OCI-LY7 (cell line): ENCODE measurements at regions of chr2 and their contacts with region 1.

Region 1: DNA sequence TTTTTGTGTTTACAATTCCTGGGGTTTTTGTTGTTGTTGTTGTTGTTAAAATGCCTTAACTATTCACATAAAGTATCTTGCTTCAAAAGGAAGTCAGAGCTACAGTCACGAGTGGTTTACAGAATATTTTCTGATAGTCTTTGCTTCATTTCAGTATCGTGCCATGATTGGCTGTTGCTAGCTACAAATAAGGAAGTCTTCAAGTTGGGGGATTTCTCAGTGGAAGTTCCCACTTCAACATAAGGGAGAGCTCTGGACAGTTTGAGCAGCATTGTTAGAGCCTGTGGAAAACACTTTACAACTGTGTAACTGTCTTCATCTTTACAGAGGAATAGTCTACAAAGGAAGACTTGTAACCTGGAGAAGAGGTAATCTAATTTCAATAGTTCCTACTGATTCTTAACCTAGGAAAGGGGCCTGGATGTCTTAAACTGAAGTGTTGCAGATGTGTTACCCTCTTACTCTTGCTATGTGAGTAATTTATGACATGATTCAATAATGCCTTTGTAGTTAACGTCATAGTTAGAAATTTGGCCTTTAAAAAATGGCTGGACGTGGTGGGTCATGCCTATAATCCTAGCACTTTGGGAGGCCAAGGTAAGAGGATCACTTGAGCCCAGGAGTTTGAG is 23.4 kb upstream of the TANK start:
- DNase-seq: peak; percentile 77
- H3K4me3 ChIP-seq: peak overlapping the region; percentile 67
- H3K27ac ChIP-seq: peak overlapping the region; percentile 62
- H3K4me1 ChIP-seq: peaks cover 30% of the 10 kb centered on the region
- CTCF ChIP-seq: no peak

Region 2: GRCh38 chr2:160928854-160929620 is 207.8 kb before region 1 on chr2:
- CTCF ChIA-PET with region 1: no interaction called
- POLR2A ChIA-PET with region 1: no interaction called
- intact Hi-C with region 1: no loop called
- DNase-seq: no peak
- H3K4me3 ChIP-seq: no peak overlapping the region
- H3K27ac ChIP-seq: no peak overlapping the region
- H3K4me1 ChIP-seq: no peaks in the 10 kb centered on the region
- CTCF ChIP-seq: no peak

Region 3: GRCh38 chr2:161077367-161078210 is 59.2 kb before region 1 on chr2:
- CTCF ChIA-PET with region 1: no interaction called
- POLR2A ChIA-PET with region 1: no interaction called
- intact Hi-C with region 1: no loop called
- DNase-seq: no peak
- H3K4me3 ChIP-seq: no peak overlapping the region
- H3K27ac ChIP-seq: no peak overlapping the region
- H3K4me1 ChIP-seq: peaks cover 6% of the 10 kb centered on the region
- CTCF ChIP-seq: no peak

Region 4: DNA sequence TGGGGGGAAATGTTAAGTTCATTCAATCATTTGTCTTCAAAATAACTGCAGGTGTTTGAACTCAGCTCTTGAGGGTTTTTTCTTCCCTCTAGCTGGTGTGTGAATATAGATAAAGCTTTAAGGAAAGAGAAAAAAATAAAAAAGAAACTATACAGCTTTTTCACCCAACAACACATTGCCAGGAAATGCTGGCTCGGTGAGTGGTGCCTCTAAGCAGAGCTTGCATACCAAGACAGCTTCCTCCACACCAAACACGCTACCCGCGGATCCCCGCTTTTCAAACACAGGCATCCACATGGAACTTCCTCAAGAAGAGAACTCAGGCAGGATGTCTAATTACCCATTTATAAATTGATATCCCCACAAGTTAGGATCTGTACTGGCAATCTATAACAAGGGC is 46.4 kb before region 1 on chr2:
- CTCF ChIA-PET with region 1: no interaction called
- POLR2A ChIA-PET with region 1: interaction called, 13 read pairs
- intact Hi-C with region 1: no loop called
- DNase-seq: no peak
- H3K4me3 ChIP-seq: no peak overlapping the region
- H3K27ac ChIP-seq: no peak overlapping the region
- H3K4me1 ChIP-seq: peaks cover 26% of the 10 kb centered on the region
- CTCF ChIP-seq: no peak

Region 5: DNA sequence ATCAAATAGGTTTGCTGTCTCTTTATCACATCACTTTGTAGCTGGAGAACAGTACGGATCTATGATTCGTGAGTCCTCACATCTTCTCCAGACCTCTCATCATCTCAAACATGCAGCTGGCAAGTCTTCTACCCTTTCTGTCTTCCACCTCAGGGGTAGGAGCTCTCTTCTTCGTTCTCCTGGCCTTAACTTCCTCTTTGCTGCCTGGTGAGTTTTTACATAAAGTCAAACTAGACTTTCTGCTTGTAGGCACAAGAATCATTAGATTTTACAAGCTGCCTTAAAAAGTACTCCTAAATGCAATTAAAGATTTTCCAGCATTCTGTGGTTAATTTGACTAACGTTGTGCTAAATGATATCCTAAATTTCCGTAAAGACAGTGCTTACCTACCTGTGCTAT is 20.3 kb before region 1 on chr2:
- CTCF ChIA-PET with region 1: interaction called, 8 read pairs
- POLR2A ChIA-PET with region 1: interaction called, 26 read pairs
- intact Hi-C with region 1: no loop called
- DNase-seq: peak; percentile 40
- H3K4me3 ChIP-seq: no peak overlapping the region
- H3K27ac ChIP-seq: no peak overlapping the region
- H3K4me1 ChIP-seq: peaks cover 31% of the 10 kb centered on the region
- CTCF ChIP-seq: no peak

Region 6: GRCh38 chr2:161122772-161123530 is 13.9 kb before region 1 on chr2:
- CTCF ChIA-PET with region 1: interaction called, 8 read pairs
- POLR2A ChIA-PET with region 1: interaction called, 26 read pairs
- intact Hi-C with region 1: no loop called
- DNase-seq: no peak
- H3K4me3 ChIP-seq: no peak overlapping the region
- H3K27ac ChIP-seq: no peak overlapping the region
- H3K4me1 ChIP-seq: peaks cover 7% of the 10 kb centered on the region
- CTCF ChIP-seq: no peak

Region 7: GRCh38 chr2:161160226-161161069 is 23.6 kb after region 1 on chr2 and contains the start of gene TANK:
- CTCF ChIA-PET with region 1: no interaction called
- POLR2A ChIA-PET with region 1: interaction called, 9 read pairs
- intact Hi-C with region 1: loop called (anchors 2 kb)
- DNase-seq: peak; percentile 97
- H3K4me3 ChIP-seq: peak within 1 kb of the TSS; percentile 85
- H3K27ac ChIP-seq: peak within 1 kb of the TSS; percentile 91
- H3K4me1 ChIP-seq: peaks cover 29% of the 10 kb centered on the region
- CTCF ChIP-seq: 0 out of 2 replicates have a peak, but pooled peaks have one; percentile 12
- total RNA-seq, gene TANK: 43.4 and 52.6 TPM in 2 replicates